ENCODE measurements at regions of chr9 and their contacts with region 1.

Region 1: DNA sequence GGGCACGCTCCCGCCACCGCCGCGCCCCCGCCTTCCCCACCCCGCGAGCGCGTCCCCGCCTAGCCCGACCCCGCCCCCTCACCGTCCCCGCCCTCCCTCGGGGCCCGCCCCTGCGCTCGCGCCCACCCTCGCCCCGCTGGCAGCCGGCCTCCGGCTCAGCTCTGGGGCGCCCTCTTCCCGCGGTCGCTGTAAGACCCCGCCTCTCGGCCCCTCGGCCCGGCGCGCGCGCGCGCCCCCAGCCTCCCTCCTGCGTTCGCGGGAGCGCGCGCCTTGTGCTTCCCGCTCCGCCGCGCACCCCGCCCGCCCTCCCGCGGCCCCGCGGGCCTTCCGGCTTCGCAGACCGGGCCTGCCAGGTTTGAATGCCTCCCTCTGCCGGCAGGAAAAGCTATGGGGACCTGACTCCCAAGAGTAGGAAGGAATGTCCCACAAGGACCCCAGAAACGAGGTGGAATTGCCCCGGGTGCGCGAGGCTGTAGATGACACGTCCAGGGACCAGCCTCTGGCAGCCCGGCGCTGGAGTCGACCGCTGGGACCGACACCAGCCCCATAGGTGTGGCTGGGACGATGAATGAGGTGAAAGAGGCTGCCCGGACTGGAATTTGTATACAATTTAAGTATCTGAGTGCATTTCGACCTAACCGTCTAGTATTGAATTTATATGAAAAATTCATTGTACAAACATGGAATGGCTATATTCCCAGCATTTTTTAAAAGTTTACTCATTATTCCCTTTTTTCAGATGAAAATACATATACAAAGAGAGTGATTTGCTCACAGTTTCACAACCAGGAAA is 416 bp upstream of the PTBP3 start:
- DNase-seq: peak; percentile 74 to 93 (median 88)
- H3K4me3 ChIP-seq: peak overlapping the region; percentile 61 to 99 (median 90)
- H3K27ac ChIP-seq: peak overlapping the region; percentile 82 to 99 (median 95)
- H3K27me3 ChIP-seq: no peaks in the 10 kb centered on the region
- CTCF ChIP-seq: peak in 54 of 56 donors; percentile 31 to 78 (median 54)

Region 2: DNA sequence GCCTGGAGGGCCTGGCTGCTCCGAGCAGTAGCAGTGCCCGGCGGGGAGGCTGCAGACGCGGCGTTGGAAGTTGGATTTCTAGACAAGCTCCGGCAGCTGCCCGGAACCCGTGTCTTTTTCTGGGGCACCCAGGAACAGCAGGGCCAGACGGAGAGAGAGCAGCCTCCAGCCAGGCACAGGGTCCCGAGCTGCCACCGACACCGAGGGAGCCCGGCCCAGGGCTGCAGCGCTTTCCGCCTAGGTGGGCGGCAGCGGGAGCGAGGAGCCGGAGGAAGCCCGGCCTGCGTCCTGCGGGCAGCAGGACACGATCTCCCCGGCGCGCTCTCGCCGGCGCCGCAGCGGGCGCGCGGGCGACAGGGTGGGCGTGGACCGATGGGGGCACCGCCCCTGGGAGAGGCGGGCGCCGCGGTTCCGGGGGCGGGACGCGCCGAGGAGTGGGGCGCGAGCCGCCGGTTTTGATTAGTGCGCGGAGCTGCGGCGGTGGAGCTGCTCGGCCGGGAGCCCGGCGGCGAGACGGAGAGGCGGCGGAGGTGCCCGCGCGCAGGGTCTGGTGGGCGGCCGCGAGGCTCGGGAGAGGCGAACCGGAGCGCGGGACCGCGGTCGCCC is 437.4 kb before region 1 on chr9 and contains the start of gene UGCG:
- intact Hi-C with region 1: loop called (anchors 2 to 5 kb)
- DNase-seq: peak; percentile 62 to 94 (median 86)
- H3K4me3 ChIP-seq: peak within 1 kb of the TSS; percentile 68 to 98 (median 89)
- H3K27ac ChIP-seq: peak within 1 kb of the TSS in 58 of 59 donors; percentile 67 to 96 (median 90)
- H3K27me3 ChIP-seq: no peaks in the 10 kb centered on the region
- CTCF ChIP-seq: peak in 10 of 56 donors; percentile 4 to 55 (median 12)
- total RNA-seq, gene UGCG: 12.6 to 46.0 (median 30.8) TPM

Region 3: GRCh38 chr9:112097712-112098688 is 235.8 kb before region 1 on chr9:
- intact Hi-C with region 1: loop called in 1 of 2 experiments (anchors 5 kb)
- DNase-seq: peak in 6 of 10 donors; percentile 22 to 68 (median 52)
- H3K4me3 ChIP-seq: no peak overlapping the region
- H3K27ac ChIP-seq: no peak overlapping the region
- H3K27me3 ChIP-seq: no peaks in the 10 kb centered on the region
- CTCF ChIP-seq: peak; percentile 80 to 94 (median 88)

Region 4: GRCh38 chr9:112520656-112521055 is 186.8 kb after region 1 on chr9:
- intact Hi-C with region 1: no loop called
- DNase-seq: no peak
- H3K4me3 ChIP-seq: no peak overlapping the region
- H3K27ac ChIP-seq: no peak overlapping the region
- H3K27me3 ChIP-seq: no peaks in the 10 kb centered on the region
- CTCF ChIP-seq: no peak

Measured in dorsolateral prefrontal cortex (tissue), 120 donors.